Thyroid gland (tissue), 4 donors: ENCODE measurements at regions of chr2 and their contacts with region 1.

Region 1: DNA sequence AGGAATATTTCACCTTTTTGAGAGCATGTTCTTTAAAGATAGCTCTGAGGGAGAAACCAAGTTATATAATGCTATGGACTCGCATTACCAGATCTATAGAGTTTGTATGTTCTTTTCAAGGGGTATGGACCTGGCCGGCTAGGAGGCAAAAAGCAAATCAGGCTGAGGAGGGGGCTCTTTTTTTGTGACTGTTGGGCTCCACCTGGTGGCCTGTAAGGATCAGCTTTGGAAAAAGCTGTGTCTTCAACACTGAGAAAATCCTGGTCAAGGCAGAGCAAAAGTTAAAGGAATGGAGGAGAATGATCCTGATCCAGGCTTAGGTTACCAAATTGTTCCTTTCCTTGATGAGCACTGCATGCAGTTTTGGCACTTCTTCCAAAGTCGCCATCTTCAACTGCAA is 180.5 kb downstream of the DIS3L2 start:
- DNase-seq: peak; percentile 53 to 57
- H3K4me3 ChIP-seq: no peak overlapping the region
- H3K27ac ChIP-seq: no peak overlapping the region
- H3K4me1 ChIP-seq: no peaks in the 10 kb centered on the region
- H3K27me3 ChIP-seq: no peaks in the 10 kb centered on the region
- CTCF ChIP-seq: peak; percentile 33 to 90 (median 74)
- POLR2A ChIP-seq: no peak

Region 2: GRCh38 chr2:231706731-231707624 is 435.1 kb before region 1 on chr2:
- intact Hi-C with region 1: no loop called
- DNase-seq: peak; percentile 98 to 99
- H3K4me3 ChIP-seq: peak overlapping the region in 2 of 3 donors; percentile 41 to 51
- H3K27ac ChIP-seq: peak overlapping the region; percentile 99 to 100 (median 100)
- H3K4me1 ChIP-seq: peaks cover 32 to 42% of the 10 kb centered on the region in 2 donors
- H3K27me3 ChIP-seq: no peaks in the 10 kb centered on the region
- CTCF ChIP-seq: peak; percentile 73 to 86 (median 80)
- POLR2A ChIP-seq: peak; percentile 89 to 94

Region 3: DNA sequence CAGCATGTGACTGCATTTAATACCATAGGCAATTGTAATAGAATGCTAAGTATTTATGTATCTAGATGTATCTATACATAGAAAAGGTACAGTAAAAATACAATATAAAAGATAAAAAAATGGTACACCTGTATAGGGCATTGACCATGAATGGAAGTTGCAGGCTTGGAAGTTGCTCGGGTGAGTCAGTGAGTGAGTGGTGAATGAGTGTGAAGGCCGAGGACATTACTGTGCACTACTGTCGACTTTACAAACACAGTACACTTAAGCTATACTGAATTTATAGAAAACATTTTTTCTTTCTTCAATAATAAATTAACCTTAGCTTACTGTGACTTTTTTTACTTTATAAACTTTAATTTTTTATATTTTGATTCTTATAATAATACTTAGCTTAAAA is 171.6 kb before region 1 on chr2:
- intact Hi-C with region 1: no loop called
- DNase-seq: no peak
- H3K4me3 ChIP-seq: no peak overlapping the region
- H3K27ac ChIP-seq: no peak overlapping the region
- H3K4me1 ChIP-seq: no peaks in the 10 kb centered on the region
- H3K27me3 ChIP-seq: no peaks in the 10 kb centered on the region
- CTCF ChIP-seq: no peak
- POLR2A ChIP-seq: no peak

Region 4: DNA sequence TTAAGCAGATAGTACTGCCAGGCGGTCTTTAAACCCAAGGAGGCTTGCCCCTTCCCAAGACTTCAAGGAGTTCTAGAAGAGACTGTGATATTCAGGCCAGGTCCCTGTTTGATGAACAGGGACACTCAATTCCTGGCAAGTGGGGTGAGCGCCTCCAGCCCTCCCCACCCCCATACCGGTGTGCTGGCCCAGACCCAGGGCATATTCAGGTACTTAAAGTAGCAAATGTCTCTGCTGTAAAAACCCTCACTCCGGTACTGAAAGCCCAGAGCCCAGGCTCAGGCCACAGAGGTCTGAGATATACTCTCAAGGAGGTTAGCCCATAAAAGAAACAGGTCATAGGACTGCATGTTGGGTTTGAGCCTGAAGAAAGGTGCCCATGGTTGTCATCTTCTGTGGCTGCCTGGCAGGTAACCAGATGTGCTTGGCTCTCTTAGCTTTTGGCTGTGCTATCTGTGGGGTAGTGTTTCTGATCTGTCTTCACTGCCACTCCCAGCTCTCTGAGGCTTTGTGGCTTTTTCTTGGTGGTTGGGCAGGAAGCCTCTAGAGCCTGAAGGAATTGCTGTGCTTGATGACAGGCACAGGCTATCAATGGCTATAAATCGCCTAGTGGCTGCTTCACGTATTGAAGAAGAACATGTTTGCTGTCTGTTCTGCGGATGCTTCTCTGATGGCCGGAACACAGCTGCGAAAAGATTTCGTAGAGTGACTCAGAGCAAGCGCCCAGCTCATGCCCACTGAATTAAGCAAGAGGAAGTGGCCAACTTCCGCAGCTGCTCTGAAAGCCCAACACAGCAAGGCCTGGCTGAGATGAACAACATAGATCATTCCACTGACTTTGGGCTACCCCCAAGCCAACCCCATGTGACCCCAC is 173.2 kb after region 1 on chr2:
- intact Hi-C with region 1: no loop called
- DNase-seq: peak; percentile 74 to 77
- H3K4me3 ChIP-seq: no peak overlapping the region
- H3K27ac ChIP-seq: peak overlapping the region in 2 of 3 donors; percentile 29 to 69
- H3K4me1 ChIP-seq: peaks cover 19 to 47% of the 10 kb centered on the region in 2 donors
- H3K27me3 ChIP-seq: no peaks in the 10 kb centered on the region
- CTCF ChIP-seq: peak in 1 of 6 experiments; percentile 7
- POLR2A ChIP-seq: no peak

Region 5: GRCh38 chr2:232327105-232328041 is 185.3 kb after region 1 on chr2:
- intact Hi-C with region 1: loop called (anchors 5 kb)
- DNase-seq: peak; percentile 62 to 73
- H3K4me3 ChIP-seq: no peak overlapping the region
- H3K27ac ChIP-seq: no peak overlapping the region
- H3K4me1 ChIP-seq: peaks cover 22 to 42% of the 10 kb centered on the region in 2 donors
- H3K27me3 ChIP-seq: no peaks in the 10 kb centered on the region
- CTCF ChIP-seq: peak; percentile 48 to 94 (median 84)
- POLR2A ChIP-seq: no peak

Region 6: GRCh38 chr2:232960862-232961261 is 818.8 kb after region 1 on chr2:
- intact Hi-C with region 1: no loop called
- DNase-seq: no peak
- H3K4me3 ChIP-seq: no peak overlapping the region
- H3K27ac ChIP-seq: no peak overlapping the region
- H3K4me1 ChIP-seq: no peaks in the 10 kb centered on the region
- H3K27me3 ChIP-seq: no peaks in the 10 kb centered on the region
- CTCF ChIP-seq: no peak
- POLR2A ChIP-seq: no peak